ENCODE measurements at regions of chr19 and their contacts with region 1.

Region 1: GRCh38 chr19:5690125-5690954 is at the start of gene RPL36:
- DNase-seq: peak; percentile 97 to 99
- ATAC-seq: peak; percentile 66 to 89 (median 82)
- H3K4me3 ChIP-seq: peak within 1 kb of the TSS; percentile 64 to 98 (median 80)
- H3K27ac ChIP-seq: peak within 1 kb of the TSS; percentile 60 to 97 (median 88)
- H3K4me1 ChIP-seq: peaks cover 7 to 47% (median 35%) of the 10 kb centered on the region in 9 donors
- H3K27me3 ChIP-seq: no peaks in the 10 kb centered on the region
- CTCF ChIP-seq: peak; percentile 93 to 99 (median 98)
- total RNA-seq, gene RPL36: 270 to 463 (median 322) TPM

Region 2: DNA sequence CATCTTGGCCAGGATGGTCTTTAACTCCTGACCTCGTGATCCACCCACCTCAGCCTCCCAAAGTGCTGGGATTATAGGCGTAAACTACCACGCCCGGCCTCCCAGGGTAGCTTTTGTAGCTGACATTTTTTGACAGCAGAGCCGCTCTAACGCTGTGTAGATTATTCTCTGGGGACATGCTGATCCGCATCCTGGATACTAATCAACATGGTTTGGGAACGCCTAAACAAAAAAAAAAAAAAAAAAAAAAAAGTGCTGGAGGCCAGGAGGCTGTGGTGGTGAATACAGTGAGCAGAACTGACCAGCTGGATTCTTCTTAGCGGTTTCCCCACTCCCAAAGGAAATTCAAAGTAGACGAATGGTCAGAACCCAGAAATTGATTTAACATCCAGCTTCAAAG is 24.5 kb after region 1 on chr19:
- intact Hi-C with region 1: loop called in 3 of 10 experiments (anchors 2 kb)
- DNase-seq: no peak
- ATAC-seq: peak in 6 of 8 donors; percentile 16 to 76 (median 52)
- H3K4me3 ChIP-seq: no peak overlapping the region
- H3K27ac ChIP-seq: peak overlapping the region in 6 of 10 donors; percentile 5 to 55 (median 20)
- H3K4me1 ChIP-seq: peaks cover 0 to 40% (median 25%) of the 10 kb centered on the region in 9 donors
- H3K27me3 ChIP-seq: no peaks in the 10 kb centered on the region
- CTCF ChIP-seq: no peak

Region 3: DNA sequence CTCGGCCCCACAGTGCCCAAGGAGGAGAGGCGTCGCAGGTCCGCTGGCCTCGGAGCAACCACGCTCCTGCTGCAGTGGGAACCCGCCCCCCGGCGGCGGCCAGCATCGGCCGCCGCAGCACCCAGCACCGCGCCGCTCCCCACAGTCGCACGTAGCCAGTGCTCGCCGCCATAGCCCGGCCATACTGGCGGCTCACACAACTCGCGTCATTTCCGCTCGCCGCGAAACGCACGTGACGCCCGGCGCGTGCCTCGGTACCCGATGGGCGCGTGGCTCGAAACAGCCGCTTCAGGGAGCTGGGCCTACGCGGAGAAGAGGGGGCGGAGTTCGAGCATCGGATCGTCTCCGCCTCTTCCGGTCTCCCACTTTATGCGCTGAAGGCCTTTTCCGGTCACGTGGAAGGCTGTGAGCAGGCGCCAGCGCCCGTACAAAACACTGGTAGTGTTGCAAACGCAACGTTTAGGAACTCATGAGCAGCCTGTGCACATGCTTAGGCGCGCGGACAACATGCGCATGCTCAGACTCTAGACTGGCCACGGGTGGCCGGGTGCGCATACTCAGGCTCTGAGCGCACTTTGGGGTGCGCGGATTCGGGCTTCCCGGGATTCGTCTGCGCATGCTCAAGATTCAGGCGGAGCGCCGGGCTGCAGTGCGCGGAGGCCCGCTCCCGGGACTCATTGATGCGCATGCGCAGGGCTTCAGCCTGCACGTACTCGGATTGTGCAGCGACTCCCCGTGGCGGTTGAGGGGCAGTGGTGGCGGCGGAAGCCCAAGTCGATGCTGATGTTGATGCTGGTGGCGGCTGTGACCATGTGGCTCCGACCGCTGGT is 29.8 kb after region 1 on chr19 and contains the starts of genes CATSPERD and LONP1:
- intact Hi-C with region 1: loop called in 3 of 10 experiments (anchors 2 kb)
- DNase-seq: peak; percentile 97 to 98
- ATAC-seq: peak; percentile 96 to 99 (median 98)
- H3K4me3 ChIP-seq: peak within 1 kb of the TSS; percentile 86 to 100 (median 96)
- H3K27ac ChIP-seq: peak within 1 kb of the TSS; percentile 83 to 99 (median 93)
- H3K4me1 ChIP-seq: peaks cover 0 to 46% (median 29%) of the 10 kb centered on the region in 9 donors
- H3K27me3 ChIP-seq: no peaks in the 10 kb centered on the region
- CTCF ChIP-seq: peak; percentile 85 to 99 (median 94)
- total RNA-seq, gene CATSPERD: not detected
- total RNA-seq, gene LONP1: 71.4 to 101 (median 88.5) TPM

Measured in heart right ventricle (tissue), 16 donors.